Gastrocnemius medialis (tissue), 4 donors: ENCODE measurements at regions of chr2 and their contacts with region 1.

Region 1: GRCh38 chr2:219160186-219161017 is at the start of gene NHEJ1:
- DNase-seq: peak; percentile 95 to 97
- ATAC-seq: peak; percentile 96
- H3K4me3 ChIP-seq: peak within 1 kb of the TSS; percentile 67 to 96 (median 78)
- H3K27ac ChIP-seq: peak within 1 kb of the TSS; percentile 98 to 100 (median 98)
- H3K4me1 ChIP-seq: peaks cover 9 to 11% of the 10 kb centered on the region in 2 donors
- H3K27me3 ChIP-seq: no peaks in the 10 kb centered on the region
- CTCF ChIP-seq: peak; percentile 94 to 100 (median 99)
- POLR2A ChIP-seq: peak; percentile 72
- total RNA-seq, gene NHEJ1: 24.5 to 39.0 (median 26.4) TPM

Region 2: DNA sequence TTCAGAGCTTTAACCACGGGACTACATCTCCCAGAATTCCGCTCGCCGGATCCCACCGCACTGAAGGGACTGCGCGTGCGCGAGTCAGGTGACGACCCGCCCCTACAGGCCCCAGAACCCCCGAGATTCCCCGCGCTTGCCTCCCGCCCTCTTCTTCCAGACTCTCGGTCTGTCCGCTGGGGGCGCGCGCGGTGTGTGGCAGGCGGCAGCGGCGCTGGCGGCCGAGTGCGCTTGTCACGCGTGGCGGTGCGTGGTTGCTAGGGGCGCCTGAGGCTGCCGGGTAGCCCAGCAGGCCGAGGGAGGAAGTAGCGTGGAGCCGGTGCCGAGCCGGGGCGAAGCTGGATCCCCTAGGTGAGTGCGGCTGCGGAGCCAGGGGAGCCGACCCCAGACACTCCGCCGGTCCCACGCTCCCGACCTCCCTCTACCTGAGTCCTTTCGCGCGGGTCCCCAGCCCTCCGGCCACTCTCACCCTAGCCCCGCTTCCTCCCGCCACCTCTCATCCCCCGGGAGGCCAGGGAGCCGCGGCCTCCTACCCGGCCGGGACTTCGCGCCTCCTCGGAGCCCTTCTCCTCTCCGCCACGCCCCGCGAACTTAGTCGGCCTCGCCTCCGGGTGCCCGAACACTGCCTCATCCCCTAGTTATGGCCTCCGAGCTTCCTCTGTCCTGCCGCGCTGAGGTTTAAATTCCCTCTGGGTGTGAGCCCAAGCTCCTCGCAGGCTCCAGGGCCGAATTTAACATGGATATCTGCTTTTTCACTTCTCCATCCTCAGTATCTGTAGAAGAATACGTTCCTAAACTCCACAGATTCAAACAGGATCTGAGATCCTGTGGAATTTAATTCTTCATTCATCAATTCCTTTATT is 449.5 kb before region 1 on chr2 and contains the start of gene TTLL4:
- in situ Hi-C with region 1: no loop called
- intact Hi-C with region 1: loop called (anchors 1 kb)
- DNase-seq: peak; percentile 96 to 97
- ATAC-seq: peak; percentile 97 to 98
- H3K4me3 ChIP-seq: peak within 1 kb of the TSS; percentile 70 to 90 (median 83)
- H3K27ac ChIP-seq: peak within 1 kb of the TSS; percentile 81 to 92 (median 86)
- H3K4me1 ChIP-seq: peaks cover 9% of the 10 kb centered on the region in 2 donors
- H3K27me3 ChIP-seq: no peaks in the 10 kb centered on the region
- CTCF ChIP-seq: peak; percentile 84 to 95 (median 88)
- POLR2A ChIP-seq: peak; percentile 55 to 69
- total RNA-seq, gene TTLL4: 4.4 to 16.2 (median 6.4) TPM

Region 3: GRCh38 chr2:219171231-219171651 is 10.8 kb after region 1 on chr2:
- in situ Hi-C with region 1: no loop called
- intact Hi-C with region 1: loop called (anchors 1 kb)
- DNase-seq: peak; percentile 80 to 82
- ATAC-seq: peak; percentile 82 to 88
- H3K4me3 ChIP-seq: no peak overlapping the region
- H3K27ac ChIP-seq: peak overlapping the region; percentile 68 to 84 (median 76)
- H3K4me1 ChIP-seq: peaks cover 14 to 19% of the 10 kb centered on the region in 2 donors
- H3K27me3 ChIP-seq: no peaks in the 10 kb centered on the region
- CTCF ChIP-seq: peak; percentile 51 to 78 (median 76)
- POLR2A ChIP-seq: peak; percentile 12 to 24

Region 4: DNA sequence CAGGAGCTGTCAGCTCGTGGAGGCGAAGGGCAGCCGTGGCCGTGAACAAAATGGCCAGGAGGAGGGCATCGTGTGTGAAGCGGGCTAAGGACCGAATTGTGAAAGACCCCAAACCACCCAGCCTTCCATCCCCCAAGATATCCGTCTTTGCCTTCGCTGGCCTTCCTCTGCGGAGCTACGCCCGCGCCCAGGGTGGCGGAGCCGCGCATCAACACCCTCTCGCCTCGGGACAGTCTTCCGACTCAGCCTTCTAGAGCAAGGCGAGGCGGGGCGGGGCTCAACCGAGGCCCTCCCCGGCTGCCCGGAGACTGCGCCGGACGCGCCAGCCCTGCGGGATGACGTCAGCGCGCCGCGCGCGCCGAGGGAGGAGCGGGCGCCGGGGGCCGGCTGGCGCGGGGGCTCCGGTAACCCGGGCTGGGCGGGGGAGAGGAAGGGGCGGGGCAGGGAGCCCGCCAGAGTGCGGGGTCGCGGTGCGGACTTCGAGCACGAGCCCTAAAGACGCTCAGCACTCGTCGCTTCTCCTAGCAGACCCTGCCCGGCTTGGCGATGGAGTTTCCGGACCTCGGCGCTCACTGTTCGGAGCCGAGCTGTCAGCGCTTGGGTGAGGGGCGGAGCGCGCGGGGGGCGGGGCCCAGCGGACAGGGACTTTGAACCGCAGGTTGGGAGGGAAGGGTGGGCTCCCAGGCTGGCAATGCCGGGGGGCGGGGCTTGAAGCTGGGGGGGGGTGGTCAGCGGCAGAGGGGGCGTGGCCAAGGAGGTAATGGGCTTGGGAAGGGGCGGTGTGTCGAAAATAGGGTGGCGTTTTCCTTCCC is 46.2 kb after region 1 on chr2 and contains the start of gene ZFAND2B:
- in situ Hi-C with region 1: no loop called
- intact Hi-C with region 1: loop called (anchors 1 kb)
- DNase-seq: peak; percentile 90 to 92
- ATAC-seq: peak; percentile 93 to 95
- H3K4me3 ChIP-seq: peak within 1 kb of the TSS; percentile 71 to 94 (median 84)
- H3K27ac ChIP-seq: peak within 1 kb of the TSS; percentile 87 to 99 (median 98)
- H3K4me1 ChIP-seq: peaks cover 16 to 21% of the 10 kb centered on the region in 2 donors
- H3K27me3 ChIP-seq: no peaks in the 10 kb centered on the region
- CTCF ChIP-seq: peak in 4 of 5 experiments; percentile 14 to 43 (median 18)
- POLR2A ChIP-seq: peak; percentile 89 to 93
- total RNA-seq, gene ZFAND2B: 33.2 to 60.8 (median 41.2) TPM

Region 5: GRCh38 chr2:219278655-219279516 is 118.5 kb after region 1 on chr2 and contains the start of gene DNAJB2:
- in situ Hi-C with region 1: loop called in 2 of 4 experiments (anchors 10 to 25 kb)
- intact Hi-C with region 1: loop called (anchors 1 kb)
- DNase-seq: peak; percentile 98
- ATAC-seq: peak; percentile 80 to 84
- H3K4me3 ChIP-seq: peak within 1 kb of the TSS; percentile 57 to 87 (median 76)
- H3K27ac ChIP-seq: peak within 1 kb of the TSS; percentile 92 to 98 (median 96)
- H3K4me1 ChIP-seq: peaks cover 30 to 33% of the 10 kb centered on the region in 2 donors
- H3K27me3 ChIP-seq: no peaks in the 10 kb centered on the region
- CTCF ChIP-seq: no peak
- POLR2A ChIP-seq: peak; percentile 94 to 96
- total RNA-seq, gene DNAJB2: 58.6 to 76.5 (median 71.8) TPM

Region 6: DNA sequence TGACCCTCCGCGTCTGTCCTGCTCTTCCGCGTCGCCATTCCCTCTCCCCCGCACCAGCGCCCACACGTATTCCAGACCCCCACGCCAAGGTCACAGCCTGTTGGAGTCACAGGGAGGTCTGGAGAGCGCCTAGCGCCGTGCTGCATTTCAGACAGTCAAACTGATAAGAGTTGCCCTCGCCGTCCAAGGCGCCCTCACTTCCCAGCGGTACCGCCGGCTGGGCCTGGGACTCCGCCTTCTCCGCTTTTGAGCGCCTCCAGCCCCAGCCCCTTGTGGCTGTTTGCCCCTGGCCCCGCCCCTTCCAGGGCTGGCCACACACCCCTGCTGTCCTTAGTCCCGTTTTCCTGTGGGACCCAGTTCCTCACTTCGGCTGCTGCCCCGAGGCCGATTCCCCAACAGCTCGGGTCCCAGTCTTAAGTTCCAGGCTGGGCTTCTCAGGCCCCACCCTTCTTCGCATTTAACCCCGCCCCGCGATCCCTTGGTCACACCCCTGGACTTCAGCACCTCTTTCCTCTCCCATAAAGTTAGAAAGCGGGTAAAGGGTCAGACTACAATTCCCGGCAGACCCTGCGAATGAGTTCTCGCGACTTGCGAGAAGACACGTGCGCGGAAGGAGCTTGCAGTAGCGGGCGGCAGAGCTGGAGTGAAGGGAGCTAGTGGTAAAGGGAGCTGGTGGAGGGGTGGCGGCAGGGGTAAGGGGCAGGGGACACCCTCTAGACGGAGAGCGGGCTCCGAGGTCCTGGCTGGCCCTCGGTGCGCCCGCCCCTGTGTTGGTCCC is 338.1 kb after region 1 on chr2 and contains the start of gene GMPPA:
- in situ Hi-C with region 1: no loop called
- intact Hi-C with region 1: loop called (anchors 10 kb)
- DNase-seq: peak; percentile 97 to 98
- ATAC-seq: peak; percentile 82 to 88
- H3K4me3 ChIP-seq: peak within 1 kb of the TSS; percentile 66 to 87 (median 74)
- H3K27ac ChIP-seq: peak within 1 kb of the TSS; percentile 91 to 100 (median 96)
- H3K4me1 ChIP-seq: peaks cover 39 to 46% of the 10 kb centered on the region in 2 donors
- H3K27me3 ChIP-seq: no peaks in the 10 kb centered on the region
- CTCF ChIP-seq: peak in 1 of 5 experiments; percentile 25
- POLR2A ChIP-seq: peak; percentile 83 to 89
- total RNA-seq, gene GMPPA: 18.0 to 25.8 (median 24.4) TPM